GM12878 (cell line): ENCODE measurements at regions of chr7 and their contacts with region 1.

Region 1: GRCh38 chr7:130982160-130982638 is 248.2 kb upstream of the KLF14 start:
- DNase-seq: no peak
- ATAC-seq: peak; percentile 97
- H3K4me3 ChIP-seq: no peak overlapping the region
- H3K27ac ChIP-seq: no peak overlapping the region
- H3K4me1 ChIP-seq: peaks cover 3% of the 10 kb centered on the region; the same call in 1 of the 2 replicates
- H3K27me3 ChIP-seq: no peaks in the 10 kb centered on the region
- CTCF ChIP-seq: peak; percentile 81 to 86 (median 85)
- EP300 ChIP-seq: no peak
- POLR2A ChIP-seq: no peak
- RAD21 ChIP-seq: peak; percentile 81

Region 2: DNA sequence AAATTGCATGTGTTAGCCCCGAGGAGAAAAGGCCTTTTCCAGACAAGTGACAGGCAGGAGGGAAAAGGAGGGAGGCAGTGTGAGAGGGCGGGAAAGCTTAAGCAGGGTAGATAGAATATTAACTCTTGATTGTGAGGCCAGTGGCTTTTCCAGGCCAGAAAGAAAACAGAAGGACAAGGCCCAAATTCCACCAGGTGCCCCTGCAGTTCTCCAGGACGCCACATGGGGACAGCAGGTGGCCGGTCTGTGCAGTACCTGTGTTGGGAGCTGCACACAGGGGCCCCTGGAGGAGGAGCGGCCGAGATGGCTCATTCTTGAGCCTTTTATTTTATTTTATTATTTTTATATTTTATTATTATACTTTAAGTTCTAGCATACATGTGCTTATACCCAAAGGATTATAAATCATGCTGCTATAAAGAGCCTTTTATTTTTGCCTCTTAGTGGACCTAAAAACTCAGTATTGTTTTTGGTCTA is 106.9 kb before region 1 on chr7:
- CTCF ChIA-PET with region 1: interaction called, 13 read pairs
- POLR2A ChIA-PET with region 1: no interaction called
- RAD21 ChIA-PET with region 1: interaction called, 3 read pairs
- SMC1A ChIA-PET with region 1: interaction called, 4 read pairs
- in situ Hi-C with region 1: no loop called
- intact Hi-C with region 1: no loop called
- DNase-seq: no peak
- ATAC-seq: peak; percentile 90
- H3K4me3 ChIP-seq: no peak overlapping the region
- H3K27ac ChIP-seq: no peak overlapping the region
- H3K4me1 ChIP-seq: no peaks in the 10 kb centered on the region
- H3K27me3 ChIP-seq: no peaks in the 10 kb centered on the region
- CTCF ChIP-seq: peak; percentile 70 to 94 (median 88)
- EP300 ChIP-seq: no peak
- POLR2A ChIP-seq: peak; percentile 57; the same call in 1 of the 2 replicates
- RAD21 ChIP-seq: peak; percentile 88

Region 3: GRCh38 chr7:130904031-130904757 is 78.0 kb before region 1 on chr7:
- CTCF ChIA-PET with region 1: interaction called, 11 read pairs
- POLR2A ChIA-PET with region 1: no interaction called
- RAD21 ChIA-PET with region 1: interaction called, 3 read pairs
- SMC1A ChIA-PET with region 1: interaction called, 5 read pairs
- in situ Hi-C with region 1: no loop called
- intact Hi-C with region 1: no loop called
- DNase-seq: no peak
- ATAC-seq: no peak
- H3K4me3 ChIP-seq: no peak overlapping the region
- H3K27ac ChIP-seq: peak overlapping the region; percentile 16; the same call in 1 of the 2 replicates
- H3K4me1 ChIP-seq: peaks cover 36% of the 10 kb centered on the region
- H3K27me3 ChIP-seq: no peaks in the 10 kb centered on the region
- CTCF ChIP-seq: no peak
- EP300 ChIP-seq: no peak
- POLR2A ChIP-seq: no peak
- RAD21 ChIP-seq: no peak

Region 4: DNA sequence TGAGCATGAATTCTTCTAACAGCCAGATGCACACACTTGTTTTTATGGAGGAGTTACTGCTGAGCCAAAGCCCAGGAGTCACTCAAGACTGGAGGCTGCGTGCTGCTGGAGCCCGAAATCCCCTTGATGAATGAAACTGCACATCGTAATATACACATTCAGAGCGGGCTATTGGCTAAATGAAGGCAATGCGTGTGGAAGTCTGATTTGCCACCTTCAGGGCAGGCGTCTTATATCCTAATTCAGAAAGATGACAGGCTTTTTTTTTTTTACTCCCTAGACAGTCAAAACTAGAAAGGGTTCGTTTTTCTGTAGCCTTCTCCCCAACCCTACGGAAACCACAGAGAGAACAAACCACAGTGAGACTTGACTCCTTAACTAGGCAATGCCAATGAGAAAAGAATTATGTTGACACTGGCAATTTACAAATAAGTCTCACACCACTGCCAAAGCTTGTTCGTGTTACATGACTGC is 21.0 kb before region 1 on chr7:
- CTCF ChIA-PET with region 1: interaction called, 53 read pairs
- POLR2A ChIA-PET with region 1: interaction called, 4 read pairs
- RAD21 ChIA-PET with region 1: interaction called, 18 read pairs
- SMC1A ChIA-PET with region 1: interaction called, 38 read pairs
- in situ Hi-C with region 1: no loop called
- intact Hi-C with region 1: no loop called
- DNase-seq: peak; percentile 98
- ATAC-seq: peak; percentile 82
- H3K4me3 ChIP-seq: peak overlapping the region; percentile 72
- H3K27ac ChIP-seq: peak overlapping the region; percentile 93
- H3K4me1 ChIP-seq: peaks cover 17% of the 10 kb centered on the region
- H3K27me3 ChIP-seq: no peaks in the 10 kb centered on the region
- CTCF ChIP-seq: no peak
- EP300 ChIP-seq: peak; percentile 90 to 91
- POLR2A ChIP-seq: peak; percentile 95
- RAD21 ChIP-seq: no peak

Region 5: DNA sequence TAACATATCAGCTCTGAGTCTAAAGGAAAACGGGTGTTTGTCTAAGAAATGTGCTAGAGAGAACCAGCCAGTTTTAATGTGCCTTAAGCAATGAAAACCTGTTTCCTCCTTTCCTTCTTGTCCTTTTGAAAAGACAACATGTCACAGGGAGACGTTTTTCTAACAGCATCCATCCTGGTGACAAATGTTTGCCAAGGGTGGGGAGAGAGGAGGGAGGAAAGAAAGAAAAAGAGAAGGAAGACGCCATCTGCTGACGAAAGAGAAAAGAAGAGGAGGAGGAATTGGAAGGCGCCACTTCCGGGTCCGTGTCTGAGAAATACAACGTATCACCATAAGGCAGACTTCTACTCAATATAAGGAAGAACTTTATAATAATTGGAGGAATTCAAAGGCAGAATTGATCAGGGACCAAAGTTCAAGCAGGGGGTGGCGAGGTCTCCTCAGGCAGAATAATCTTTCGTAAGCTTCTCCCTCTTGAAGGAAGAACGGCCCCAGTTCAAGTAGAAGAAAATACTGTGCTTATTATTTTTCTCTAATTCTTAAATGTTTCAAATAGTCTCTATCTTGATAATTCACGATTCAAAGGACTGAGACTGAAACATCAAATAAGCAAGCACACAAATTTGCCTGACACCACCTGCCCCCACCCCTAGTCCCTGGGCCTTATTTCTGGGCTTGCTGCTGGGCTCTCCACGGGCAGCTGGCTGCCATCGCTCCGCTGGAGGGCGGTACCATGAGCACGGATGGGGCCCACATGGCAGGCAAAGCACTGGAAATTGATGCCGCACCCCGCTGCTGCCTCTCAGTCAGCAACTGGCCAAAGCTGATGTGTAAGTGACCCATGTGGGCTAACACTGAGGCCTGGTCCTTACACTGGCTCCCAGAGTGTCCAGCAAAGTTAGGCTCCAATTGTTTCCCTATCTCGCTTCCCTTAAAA is 25.5 kb after region 1 on chr7:
- CTCF ChIA-PET with region 1: interaction called, 56 read pairs
- POLR2A ChIA-PET with region 1: interaction called, 5 read pairs
- RAD21 ChIA-PET with region 1: interaction called, 30 read pairs
- SMC1A ChIA-PET with region 1: interaction called, 41 read pairs
- in situ Hi-C with region 1: no loop called
- intact Hi-C with region 1: loop called (anchors 1 kb)
- DNase-seq: peak; percentile 63
- ATAC-seq: peak; percentile 64
- H3K4me3 ChIP-seq: peak overlapping the region; percentile 22; the same call in 1 of the 2 replicates
- H3K27ac ChIP-seq: peak overlapping the region; percentile 89
- H3K4me1 ChIP-seq: peaks cover 48% of the 10 kb centered on the region
- H3K27me3 ChIP-seq: no peaks in the 10 kb centered on the region
- CTCF ChIP-seq: peak; percentile 46 to 66 (median 54)
- EP300 ChIP-seq: no peak
- POLR2A ChIP-seq: peak; percentile 64
- RAD21 ChIP-seq: peak; percentile 80

Region 6: GRCh38 chr7:131027287-131027773 is 45.1 kb after region 1 on chr7:
- CTCF ChIA-PET with region 1: interaction called, 23 read pairs
- POLR2A ChIA-PET with region 1: no interaction called
- RAD21 ChIA-PET with region 1: interaction called, 8 read pairs
- SMC1A ChIA-PET with region 1: interaction called, 10 read pairs
- in situ Hi-C with region 1: no loop called
- intact Hi-C with region 1: no loop called
- DNase-seq: no peak
- ATAC-seq: peak; percentile 46
- H3K4me3 ChIP-seq: no peak overlapping the region
- H3K27ac ChIP-seq: peak overlapping the region; percentile 61
- H3K4me1 ChIP-seq: peaks cover 53% of the 10 kb centered on the region
- H3K27me3 ChIP-seq: no peaks in the 10 kb centered on the region
- CTCF ChIP-seq: no peak
- EP300 ChIP-seq: no peak
- POLR2A ChIP-seq: peak; percentile 38; the same call in 1 of the 2 replicates
- RAD21 ChIP-seq: 0 out of 2 replicates have a peak, but pooled peaks have one; percentile 22

Region 7: GRCh38 chr7:131057015-131057793 is 75.0 kb after region 1 on chr7:
- CTCF ChIA-PET with region 1: interaction called, 5 read pairs
- POLR2A ChIA-PET with region 1: no interaction called
- RAD21 ChIA-PET with region 1: no interaction called
- SMC1A ChIA-PET with region 1: interaction called, 12 read pairs
- in situ Hi-C with region 1: no loop called
- intact Hi-C with region 1: no loop called
- DNase-seq: no peak
- ATAC-seq: peak; percentile 75
- H3K4me3 ChIP-seq: no peak overlapping the region
- H3K27ac ChIP-seq: no peak overlapping the region; the same call in 1 of the 2 replicates
- H3K4me1 ChIP-seq: 0 out of 2 replicates have a peak, but pooled peaks cover 6% of the 10 kb centered on the region
- H3K27me3 ChIP-seq: no peaks in the 10 kb centered on the region
- CTCF ChIP-seq: no peak
- EP300 ChIP-seq: no peak
- POLR2A ChIP-seq: no peak
- RAD21 ChIP-seq: no peak

Region 8: GRCh38 chr7:131097662-131098376 is 115.6 kb after region 1 on chr7:
- CTCF ChIA-PET with region 1: no interaction called
- POLR2A ChIA-PET with region 1: no interaction called
- RAD21 ChIA-PET with region 1: no interaction called
- SMC1A ChIA-PET with region 1: no interaction called
- in situ Hi-C with region 1: no loop called
- intact Hi-C with region 1: no loop called
- DNase-seq: no peak
- ATAC-seq: peak; percentile 52
- H3K4me3 ChIP-seq: 0 out of 2 replicates have a peak overlapping the region, but pooled peaks have one; percentile 23
- H3K27ac ChIP-seq: no peak overlapping the region
- H3K4me1 ChIP-seq: peaks cover 32% of the 10 kb centered on the region
- H3K27me3 ChIP-seq: no peaks in the 10 kb centered on the region
- CTCF ChIP-seq: no peak
- EP300 ChIP-seq: no peak
- POLR2A ChIP-seq: no peak
- RAD21 ChIP-seq: no peak